ENCODE measurements at regions of chr10 and their contacts with region 1.

Region 1: GRCh38 chr10:60769406-60769805 is 8.9 kb upstream of the CDK1 start:
- DNase-seq: no peak
- H3K4me3 ChIP-seq: no peak overlapping the region
- H3K4me3 Mint-ChIP-seq: peak overlapping the region; percentile 7
- H3K27ac Mint-ChIP-seq: no peak overlapping the region
- H3K4me1 ChIP-seq: peaks cover 10% of the 10 kb centered on the region
- H3K4me1 Mint-ChIP-seq: peaks cover 10% of the 10 kb centered on the region
- H3K27me3 ChIP-seq: no peaks in the 10 kb centered on the region
- H3K27me3 Mint-ChIP-seq: no peaks in the 10 kb centered on the region
- CTCF ChIP-seq: peak in 1 of 2 experiments; percentile 2

Region 2: GRCh38 chr10:60480865-60481563 is 288.4 kb before region 1 on chr10:
- CTCF ChIA-PET with region 1: no interaction called
- POLR2A ChIA-PET with region 1: no interaction called
- intact Hi-C with region 1: no loop called
- DNase-seq: no peak
- H3K4me3 ChIP-seq: no peak overlapping the region
- H3K4me3 Mint-ChIP-seq: no peak overlapping the region
- H3K27ac Mint-ChIP-seq: no peak overlapping the region
- H3K4me1 ChIP-seq: peaks cover 56% of the 10 kb centered on the region
- H3K4me1 Mint-ChIP-seq: peaks cover 42% of the 10 kb centered on the region
- H3K27me3 ChIP-seq: no peaks in the 10 kb centered on the region
- H3K27me3 Mint-ChIP-seq: no peaks in the 10 kb centered on the region
- CTCF ChIP-seq: no peak

Region 3: GRCh38 chr10:60508037-60508436 is 261.4 kb before region 1 on chr10:
- CTCF ChIA-PET with region 1: no interaction called
- POLR2A ChIA-PET with region 1: no interaction called
- intact Hi-C with region 1: no loop called
- DNase-seq: no peak
- H3K4me3 ChIP-seq: no peak overlapping the region
- H3K4me3 Mint-ChIP-seq: no peak overlapping the region
- H3K27ac Mint-ChIP-seq: no peak overlapping the region
- H3K4me1 ChIP-seq: no peaks in the 10 kb centered on the region
- H3K4me1 Mint-ChIP-seq: no peaks in the 10 kb centered on the region
- H3K27me3 ChIP-seq: no peaks in the 10 kb centered on the region
- H3K27me3 Mint-ChIP-seq: no peaks in the 10 kb centered on the region
- CTCF ChIP-seq: no peak

Region 4: DNA sequence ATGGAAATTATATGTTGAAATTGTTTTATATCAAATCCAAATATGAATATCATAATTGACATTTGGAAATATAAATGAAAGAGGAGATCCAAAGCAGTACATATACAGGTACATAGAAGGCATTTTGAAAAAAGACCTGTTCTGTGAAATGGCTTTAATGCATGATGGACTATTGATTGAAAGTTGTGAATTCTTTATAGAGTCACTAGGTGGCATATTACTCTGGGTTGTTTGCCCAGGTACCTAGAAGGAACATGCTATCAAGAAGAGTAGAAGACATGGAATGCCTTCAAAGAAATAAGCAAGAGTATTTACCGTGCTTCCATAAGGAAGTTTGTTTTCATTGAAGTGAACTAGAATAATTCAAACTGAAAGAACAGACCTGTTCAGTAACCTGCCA is 219.7 kb before region 1 on chr10:
- CTCF ChIA-PET with region 1: no interaction called
- POLR2A ChIA-PET with region 1: no interaction called
- intact Hi-C with region 1: loop called (anchors 1 kb)
- DNase-seq: peak in 1 of 2 experiments; percentile 45
- H3K4me3 ChIP-seq: no peak overlapping the region
- H3K4me3 Mint-ChIP-seq: no peak overlapping the region
- H3K27ac Mint-ChIP-seq: no peak overlapping the region
- H3K4me1 ChIP-seq: no peaks in the 10 kb centered on the region
- H3K4me1 Mint-ChIP-seq: no peaks in the 10 kb centered on the region
- H3K27me3 ChIP-seq: no peaks in the 10 kb centered on the region
- H3K27me3 Mint-ChIP-seq: no peaks in the 10 kb centered on the region
- CTCF ChIP-seq: peak; percentile 66 to 76

Region 5: GRCh38 chr10:60572511-60573194 is 196.8 kb before region 1 on chr10:
- CTCF ChIA-PET with region 1: no interaction called
- POLR2A ChIA-PET with region 1: no interaction called
- intact Hi-C with region 1: loop called (anchors 2 kb)
- DNase-seq: peak; percentile 65 to 73
- H3K4me3 ChIP-seq: peak overlapping the region; percentile 31
- H3K4me3 Mint-ChIP-seq: peak overlapping the region; percentile 70
- H3K27ac Mint-ChIP-seq: peak overlapping the region; percentile 7
- H3K4me1 ChIP-seq: peaks cover 8% of the 10 kb centered on the region
- H3K4me1 Mint-ChIP-seq: peaks cover 17% of the 10 kb centered on the region
- H3K27me3 ChIP-seq: no peaks in the 10 kb centered on the region
- H3K27me3 Mint-ChIP-seq: no peaks in the 10 kb centered on the region
- CTCF ChIP-seq: no peak

Region 6: DNA sequence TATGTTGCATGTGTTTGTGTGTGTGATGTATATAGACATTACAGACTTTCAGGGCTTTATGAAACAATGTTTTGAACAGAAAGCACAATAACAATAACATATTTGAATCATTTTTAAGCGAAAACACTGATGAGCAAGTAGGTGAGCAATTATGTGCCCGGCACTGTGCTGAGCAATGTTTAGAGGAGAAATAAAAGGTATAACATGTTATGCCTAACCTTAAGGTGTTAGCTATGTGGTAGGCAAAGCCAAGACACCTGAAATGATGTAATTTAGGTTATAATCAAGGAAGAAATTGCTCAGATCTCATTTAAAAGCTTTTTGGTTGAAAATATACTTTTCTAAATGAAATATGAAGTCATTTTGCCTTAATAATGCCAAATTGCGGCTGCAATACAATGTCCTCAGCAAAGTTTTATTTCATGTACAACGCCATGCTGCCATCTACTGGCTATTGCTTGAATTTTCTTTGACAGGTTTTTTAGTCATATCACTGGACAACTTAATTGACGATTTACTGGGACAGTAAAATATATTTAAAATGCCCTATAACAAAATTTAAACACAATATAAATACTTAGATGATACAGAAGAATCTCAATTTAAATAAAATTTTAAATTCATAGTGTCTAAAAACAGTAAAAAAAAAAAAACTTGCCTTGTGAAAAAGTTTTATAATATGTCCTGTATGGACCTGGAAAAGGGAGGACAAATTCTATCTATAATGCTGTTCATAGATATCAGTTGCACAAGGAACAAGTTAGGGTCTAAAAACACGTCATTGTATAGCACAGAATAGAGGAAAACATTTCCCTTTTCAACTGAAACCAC is 122.2 kb before region 1 on chr10:
- CTCF ChIA-PET with region 1: interaction called, 17 read pairs
- POLR2A ChIA-PET with region 1: no interaction called
- intact Hi-C with region 1: loop called (anchors 1 kb)
- DNase-seq: peak; percentile 52 to 77
- H3K4me3 ChIP-seq: no peak overlapping the region
- H3K4me3 Mint-ChIP-seq: no peak overlapping the region
- H3K27ac Mint-ChIP-seq: no peak overlapping the region
- H3K4me1 ChIP-seq: peaks cover 39% of the 10 kb centered on the region
- H3K4me1 Mint-ChIP-seq: peaks cover 35% of the 10 kb centered on the region
- H3K27me3 ChIP-seq: no peaks in the 10 kb centered on the region
- H3K27me3 Mint-ChIP-seq: no peaks in the 10 kb centered on the region
- CTCF ChIP-seq: peak; percentile 82 to 97

Region 7: DNA sequence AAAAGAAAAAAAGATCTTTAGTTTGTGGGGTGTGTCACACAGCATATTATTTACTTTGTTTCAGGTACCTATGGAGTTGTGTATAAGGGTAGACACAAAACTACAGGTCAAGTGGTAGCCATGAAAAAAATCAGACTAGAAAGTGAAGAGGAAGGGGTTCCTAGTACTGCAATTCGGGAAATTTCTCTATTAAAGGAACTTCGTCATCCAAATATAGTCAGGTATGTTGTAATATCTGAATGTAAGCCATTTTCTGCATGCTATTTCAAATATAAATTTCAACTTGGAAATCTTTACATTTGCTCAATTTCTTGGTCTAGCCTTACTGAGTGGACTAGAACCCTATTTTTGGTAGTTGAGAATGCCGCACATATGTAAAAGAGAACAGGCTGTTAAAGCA is 15.2 kb after region 1 on chr10:
- CTCF ChIA-PET with region 1: no interaction called
- POLR2A ChIA-PET with region 1: no interaction called
- intact Hi-C with region 1: no loop called
- DNase-seq: no peak
- H3K4me3 ChIP-seq: no peak overlapping the region
- H3K4me3 Mint-ChIP-seq: no peak overlapping the region
- H3K27ac Mint-ChIP-seq: peak overlapping the region; percentile 65
- H3K4me1 ChIP-seq: peaks cover 22% of the 10 kb centered on the region
- H3K4me1 Mint-ChIP-seq: peaks cover 19% of the 10 kb centered on the region
- H3K27me3 ChIP-seq: no peaks in the 10 kb centered on the region
- H3K27me3 Mint-ChIP-seq: no peaks in the 10 kb centered on the region
- CTCF ChIP-seq: no peak

Region 8: DNA sequence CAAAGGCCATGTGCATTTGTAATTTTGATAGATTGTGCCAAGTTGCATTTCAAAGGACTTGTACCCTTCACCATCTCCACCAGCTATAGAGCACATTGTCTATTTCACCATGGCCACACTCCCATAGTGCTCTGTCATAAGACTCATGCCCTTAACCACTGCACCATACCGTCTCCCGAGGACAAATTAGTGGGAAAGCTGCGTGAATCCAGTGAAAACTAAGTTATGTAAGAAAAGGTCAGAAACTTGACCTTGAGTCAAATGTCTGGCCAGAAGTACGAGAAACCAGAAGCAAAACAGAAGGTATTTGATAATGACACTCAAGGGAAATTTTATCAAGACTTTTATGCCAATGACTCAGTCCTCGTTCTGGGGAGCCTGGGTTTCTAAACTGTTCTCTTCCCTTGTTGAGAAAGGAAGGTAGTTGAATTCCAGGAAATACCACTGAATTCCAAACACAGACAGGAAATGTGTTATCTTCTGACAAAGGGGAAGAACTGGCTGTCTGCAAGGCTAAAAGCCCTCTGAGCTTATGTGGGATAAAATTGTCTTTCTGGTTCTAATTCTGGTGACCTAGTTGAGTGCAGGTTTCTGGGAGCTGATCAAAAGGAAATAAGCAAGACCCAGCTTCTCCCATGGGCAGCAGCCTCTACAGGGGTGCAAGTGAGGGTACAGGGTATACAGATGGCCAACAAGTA is 58.5 kb after region 1 on chr10:
- CTCF ChIA-PET with region 1: no interaction called
- POLR2A ChIA-PET with region 1: no interaction called
- intact Hi-C with region 1: no loop called
- DNase-seq: no peak
- H3K4me3 ChIP-seq: no peak overlapping the region
- H3K4me3 Mint-ChIP-seq: no peak overlapping the region
- H3K27ac Mint-ChIP-seq: no peak overlapping the region
- H3K4me1 ChIP-seq: no peaks in the 10 kb centered on the region
- H3K4me1 Mint-ChIP-seq: no peaks in the 10 kb centered on the region
- H3K27me3 ChIP-seq: no peaks in the 10 kb centered on the region
- H3K27me3 Mint-ChIP-seq: peaks cover 12% of the 10 kb centered on the region
- CTCF ChIP-seq: no peak